ENCODE measurements at regions of chr22 and their contacts with region 1.

Region 1: GRCh38 chr22:48531761-48532435 is 1295.8 kb downstream of the BRD1 start:
- DNase-seq: no peak
- ATAC-seq: no peak
- H3K4me3 ChIP-seq: no peak overlapping the region
- H3K27ac ChIP-seq: no peak overlapping the region
- H3K4me1 ChIP-seq: no peaks in the 10 kb centered on the region
- H3K27me3 ChIP-seq: peaks cover 0 to 57% (median 21%) of the 10 kb centered on the region in 7 donors
- CTCF ChIP-seq: no peak

Region 2: GRCh38 chr22:48558606-48559402 is 26.9 kb after region 1 on chr22:
- intact Hi-C with region 1: loop called in 1 of 10 experiments (anchors 1 kb)
- DNase-seq: no peak
- ATAC-seq: no peak
- H3K4me3 ChIP-seq: no peak overlapping the region
- H3K27ac ChIP-seq: no peak overlapping the region
- H3K4me1 ChIP-seq: no peaks in the 10 kb centered on the region
- H3K27me3 ChIP-seq: peaks cover 0 to 40% (median 12%) of the 10 kb centered on the region in 7 donors
- CTCF ChIP-seq: no peak